PC-9 (cell line): ENCODE measurements at regions of chr12 and their contacts with region 1.

Region 1: DNA sequence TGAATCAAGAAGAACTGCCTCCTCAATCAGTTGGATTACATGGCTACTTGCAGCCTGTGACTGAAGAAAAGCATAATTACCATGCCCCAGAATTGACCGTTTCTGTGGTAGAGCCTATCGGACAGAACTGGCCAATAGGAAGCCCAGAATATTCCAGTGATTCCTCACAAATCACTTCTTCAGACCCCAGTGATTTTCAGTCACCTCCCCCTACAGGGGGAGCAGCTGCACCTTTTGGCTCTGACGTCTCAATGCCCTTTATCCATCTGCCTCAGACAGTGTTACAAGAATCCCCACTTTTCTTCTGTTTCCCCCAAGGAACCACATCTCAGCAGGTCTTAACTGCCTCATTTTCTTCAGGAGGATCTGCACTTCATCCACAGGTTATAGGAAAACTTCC is 80.8 kb downstream of the RAD52 start:
- DNase-seq: no peak
- H3K4me3 ChIP-seq: no peak overlapping the region
- H3K27ac ChIP-seq: no peak overlapping the region
- H3K4me1 ChIP-seq: no peaks in the 10 kb centered on the region
- H3K27me3 ChIP-seq: no peaks in the 10 kb centered on the region
- CTCF ChIP-seq: no peak

Region 2: DNA sequence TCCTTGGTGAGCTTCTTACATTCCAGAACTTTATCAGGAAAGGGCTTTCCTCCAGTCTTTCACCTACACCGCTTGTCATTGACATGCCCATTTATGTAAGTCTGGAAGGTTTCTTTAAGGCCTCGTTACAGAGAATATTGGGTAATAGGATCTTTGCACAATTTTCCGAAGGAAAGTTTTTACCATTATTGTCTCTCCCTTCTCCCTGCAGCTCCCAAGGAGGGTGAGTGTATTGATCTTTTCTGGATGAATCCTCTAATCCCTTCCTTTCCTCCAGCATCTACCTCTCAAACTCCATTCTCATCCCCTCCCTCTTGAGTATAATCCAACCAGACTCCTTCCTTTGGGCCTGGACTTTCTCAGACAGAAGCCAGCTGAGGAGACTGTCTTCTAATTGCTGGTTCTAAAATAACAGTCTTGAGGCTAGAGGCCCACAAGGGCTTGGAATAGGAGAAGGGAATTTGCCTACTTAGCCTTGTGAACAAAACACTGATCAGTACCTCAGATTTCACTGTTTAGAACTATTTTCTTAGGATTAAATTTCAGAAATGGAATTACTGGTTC is 94.6 kb before region 1 on chr12:
- CTCF ChIA-PET with region 1: no interaction called
- POLR2A ChIA-PET with region 1: no interaction called
- intact Hi-C with region 1: no loop called
- DNase-seq: no peak
- H3K4me3 ChIP-seq: no peak overlapping the region
- H3K27ac ChIP-seq: no peak overlapping the region
- H3K4me1 ChIP-seq: no peaks in the 10 kb centered on the region
- H3K27me3 ChIP-seq: no peaks in the 10 kb centered on the region
- CTCF ChIP-seq: no peak

Region 3: DNA sequence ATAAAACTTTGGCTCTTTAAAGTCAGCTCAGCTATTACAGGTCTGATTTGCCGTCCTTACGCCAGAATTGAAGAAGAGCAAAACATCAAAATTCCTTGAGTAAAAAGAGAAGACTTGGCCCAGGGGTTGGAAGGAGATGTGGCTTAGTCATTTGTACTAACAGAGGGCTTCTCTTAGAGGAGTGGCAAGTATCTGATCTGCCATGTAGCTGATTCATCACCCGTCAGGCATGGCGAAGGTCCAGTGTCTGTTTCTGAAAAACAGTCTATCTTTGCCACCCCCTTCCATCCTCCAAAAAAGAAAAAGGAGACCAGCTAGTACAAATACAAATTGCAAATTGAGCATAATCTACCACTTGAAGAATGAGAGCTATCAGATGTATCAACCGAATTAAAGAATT is 11.1 kb before region 1 on chr12:
- CTCF ChIA-PET with region 1: no interaction called
- POLR2A ChIA-PET with region 1: interaction called, 10 read pairs
- intact Hi-C with region 1: no loop called
- DNase-seq: no peak
- H3K4me3 ChIP-seq: no peak overlapping the region
- H3K27ac ChIP-seq: no peak overlapping the region
- H3K4me1 ChIP-seq: no peaks in the 10 kb centered on the region
- H3K27me3 ChIP-seq: no peaks in the 10 kb centered on the region
- CTCF ChIP-seq: no peak

Region 4: DNA sequence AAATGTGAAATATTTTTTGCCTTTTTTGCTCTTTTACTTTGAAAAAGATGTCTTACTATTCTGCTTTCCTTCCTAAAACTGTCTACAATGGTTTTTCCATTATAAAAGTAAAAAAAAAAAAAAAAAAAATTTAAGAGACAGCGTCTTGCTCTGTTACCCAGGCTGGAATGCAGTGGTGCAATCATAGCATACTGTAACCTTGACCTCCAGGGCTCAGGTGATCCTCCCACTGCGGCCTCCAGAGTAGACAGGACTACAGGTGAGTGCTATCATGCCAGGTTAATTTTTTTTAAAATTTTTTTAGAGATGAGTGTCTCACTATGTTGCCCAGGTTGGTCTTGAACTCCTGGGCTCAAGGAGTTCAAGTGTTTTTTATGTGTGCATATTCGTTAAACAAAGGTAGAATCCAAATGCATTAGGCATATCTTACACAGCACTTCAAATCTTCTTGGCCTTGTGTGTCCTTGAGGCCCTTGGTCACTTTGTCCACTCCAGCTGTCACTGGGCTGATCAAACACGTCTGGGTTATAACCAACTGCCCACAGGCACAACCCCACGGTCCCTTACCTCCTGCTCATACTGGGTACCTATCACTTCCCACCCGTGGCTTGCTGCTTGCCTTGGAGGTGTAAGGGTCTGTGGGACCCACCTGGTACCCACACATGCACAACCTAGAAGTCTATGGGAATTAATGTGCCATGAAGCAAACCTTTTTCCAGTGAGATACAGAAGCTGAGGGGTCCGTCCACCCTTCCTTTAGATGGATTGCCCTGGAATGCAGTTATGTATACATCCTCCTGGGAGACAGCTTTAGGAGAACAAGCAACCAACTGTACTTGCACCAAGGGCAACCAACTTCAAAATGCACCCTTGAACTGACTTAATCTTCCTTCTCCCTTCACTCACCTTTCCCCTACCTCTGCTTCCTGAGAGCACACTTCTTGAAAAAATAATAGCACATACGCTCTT is 67.9 kb after region 1 on chr12:
- CTCF ChIA-PET with region 1: no interaction called
- POLR2A ChIA-PET with region 1: interaction called, 20 read pairs
- intact Hi-C with region 1: no loop called
- DNase-seq: no peak
- H3K4me3 ChIP-seq: no peak overlapping the region
- H3K27ac ChIP-seq: no peak overlapping the region
- H3K4me1 ChIP-seq: no peaks in the 10 kb centered on the region
- H3K27me3 ChIP-seq: no peaks in the 10 kb centered on the region
- CTCF ChIP-seq: no peak

Region 5: DNA sequence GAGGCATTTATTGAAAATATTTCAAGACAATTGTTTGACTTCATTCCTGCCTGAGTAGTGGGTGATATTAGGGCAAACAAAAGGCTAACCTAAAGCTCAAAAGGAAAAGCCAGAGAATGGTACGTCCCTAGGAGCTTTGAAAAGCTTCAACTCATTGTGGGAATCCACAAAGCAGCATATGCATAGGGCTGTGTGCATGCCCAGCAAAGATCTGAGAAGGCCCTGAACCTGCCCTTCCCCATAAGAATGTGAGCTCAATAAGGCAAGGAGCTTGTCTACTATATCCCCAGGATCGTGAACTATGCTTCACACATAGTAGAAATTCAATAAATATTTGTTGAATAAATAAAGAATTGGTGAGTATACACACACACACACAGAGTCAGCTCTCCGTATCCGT is 99.8 kb after region 1 on chr12:
- CTCF ChIA-PET with region 1: no interaction called
- POLR2A ChIA-PET with region 1: no interaction called
- intact Hi-C with region 1: no loop called
- DNase-seq: no peak
- H3K4me3 ChIP-seq: no peak overlapping the region
- H3K27ac ChIP-seq: no peak overlapping the region
- H3K4me1 ChIP-seq: no peaks in the 10 kb centered on the region
- H3K27me3 ChIP-seq: no peaks in the 10 kb centered on the region
- CTCF ChIP-seq: no peak